Activated T-helper 2 cell treated with anti-CD3 and anti-CD28 coated beads, Interferon-gamma antibody, Interleukin-2, Interleukin-4, amounts not matched to agents 10 μg/mL and 5 μg/mL and 100 μg/mL, durations not matched to agents 14 hours and 24 hours and 36 hours (primary cell): ENCODE measurements at regions of chr1 and their contacts with region 1.

Region 1: GRCh38 chr1:63522891-63523728 is at the starts of genes EFCAB7 and ITGB3BP:
- DNase-seq: peak; percentile 82
- H3K4me3 Mint-ChIP-seq: peak within 1 kb of the TSS; percentile 97
- H3K27ac Mint-ChIP-seq: peak within 1 kb of the TSS; percentile 98
- H3K4me1 Mint-ChIP-seq: peaks cover 36% of the 10 kb centered on the region
- H3K27me3 Mint-ChIP-seq: no peaks in the 10 kb centered on the region
- total RNA-seq, gene EFCAB7: 6.5 and 6.6 TPM in 2 replicates
- total RNA-seq, gene ITGB3BP: 49.3 and 52.2 TPM in 2 replicates

Region 2: GRCh38 chr1:63305043-63305442 is 218.1 kb before region 1 on chr1:
- intact Hi-C with region 1: no loop called
- DNase-seq: no peak
- H3K4me3 Mint-ChIP-seq: no peak overlapping the region
- H3K27ac Mint-ChIP-seq: no peak overlapping the region
- H3K4me1 Mint-ChIP-seq: no peaks in the 10 kb centered on the region
- H3K27me3 Mint-ChIP-seq: peaks cover 27% of the 10 kb centered on the region

Region 3: GRCh38 chr1:63367215-63368103 is 155.7 kb before region 1 on chr1 and contains the start of gene ALG6:
- intact Hi-C with region 1: loop called (anchors 1 kb)
- DNase-seq: peak; percentile 89
- H3K4me3 Mint-ChIP-seq: peak within 1 kb of the TSS; percentile 96
- H3K27ac Mint-ChIP-seq: peak within 1 kb of the TSS; percentile 84
- H3K4me1 Mint-ChIP-seq: peaks cover 19% of the 10 kb centered on the region
- H3K27me3 Mint-ChIP-seq: peaks cover 13% of the 10 kb centered on the region
- total RNA-seq, gene ALG6: 25.3 and 25.5 TPM in 2 replicates